HCT116 (cell line): ENCODE measurements at regions of chr17 and their contacts with region 1.

Region 1: DNA sequence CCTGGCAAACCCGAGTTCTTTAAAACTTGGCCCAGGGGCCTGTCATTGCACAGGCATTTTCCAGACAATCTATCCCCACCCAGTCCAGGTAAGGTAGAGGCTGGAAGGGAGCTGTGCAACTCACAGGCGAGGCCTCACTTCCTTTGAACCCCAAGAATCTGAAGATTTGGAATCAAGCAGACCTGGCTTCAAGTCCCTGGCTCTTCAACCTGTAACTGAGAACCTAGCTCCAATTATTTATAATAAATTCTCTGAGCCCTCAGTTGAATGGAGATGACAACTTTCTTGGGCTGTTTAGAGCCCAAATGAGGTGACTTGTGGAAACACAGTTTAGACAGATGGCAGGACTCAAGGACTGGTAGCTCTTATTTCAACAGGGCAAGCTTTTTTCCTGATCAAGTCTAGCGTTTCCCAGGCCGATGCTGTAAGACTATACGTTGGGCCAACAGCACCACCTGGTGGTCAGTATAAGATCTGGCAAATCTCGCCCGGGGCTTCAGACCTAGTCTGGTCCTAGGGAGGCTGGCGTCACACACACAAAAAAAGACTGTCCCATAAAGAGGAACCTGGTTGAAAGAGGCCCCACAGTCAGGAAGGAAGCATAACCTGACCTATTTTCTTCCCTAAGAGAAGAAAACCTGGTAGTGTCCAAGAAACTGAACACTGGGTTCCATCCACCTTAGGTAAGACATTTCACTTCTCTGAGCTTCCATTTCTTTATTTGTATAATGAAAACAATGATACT is 117.9 kb downstream of the C17orf67 start:
- DNase-seq: peak; percentile 83
- ATAC-seq: peak; percentile 99
- H3K4me3 ChIP-seq: no peak overlapping the region
- H3K27ac ChIP-seq: no peak overlapping the region
- H3K4me1 ChIP-seq: peaks cover 0 to 4% of the 10 kb centered on the region in 2 experiments; a peak in 1 of 4 replicates
- H3K27me3 ChIP-seq: no peaks in the 10 kb centered on the region
- CTCF ChIP-seq: peak; percentile 85 to 98 (median 97)
- POLR2A ChIP-seq: no peak
- RAD21 ChIP-seq: peak; percentile 98

Region 2: DNA sequence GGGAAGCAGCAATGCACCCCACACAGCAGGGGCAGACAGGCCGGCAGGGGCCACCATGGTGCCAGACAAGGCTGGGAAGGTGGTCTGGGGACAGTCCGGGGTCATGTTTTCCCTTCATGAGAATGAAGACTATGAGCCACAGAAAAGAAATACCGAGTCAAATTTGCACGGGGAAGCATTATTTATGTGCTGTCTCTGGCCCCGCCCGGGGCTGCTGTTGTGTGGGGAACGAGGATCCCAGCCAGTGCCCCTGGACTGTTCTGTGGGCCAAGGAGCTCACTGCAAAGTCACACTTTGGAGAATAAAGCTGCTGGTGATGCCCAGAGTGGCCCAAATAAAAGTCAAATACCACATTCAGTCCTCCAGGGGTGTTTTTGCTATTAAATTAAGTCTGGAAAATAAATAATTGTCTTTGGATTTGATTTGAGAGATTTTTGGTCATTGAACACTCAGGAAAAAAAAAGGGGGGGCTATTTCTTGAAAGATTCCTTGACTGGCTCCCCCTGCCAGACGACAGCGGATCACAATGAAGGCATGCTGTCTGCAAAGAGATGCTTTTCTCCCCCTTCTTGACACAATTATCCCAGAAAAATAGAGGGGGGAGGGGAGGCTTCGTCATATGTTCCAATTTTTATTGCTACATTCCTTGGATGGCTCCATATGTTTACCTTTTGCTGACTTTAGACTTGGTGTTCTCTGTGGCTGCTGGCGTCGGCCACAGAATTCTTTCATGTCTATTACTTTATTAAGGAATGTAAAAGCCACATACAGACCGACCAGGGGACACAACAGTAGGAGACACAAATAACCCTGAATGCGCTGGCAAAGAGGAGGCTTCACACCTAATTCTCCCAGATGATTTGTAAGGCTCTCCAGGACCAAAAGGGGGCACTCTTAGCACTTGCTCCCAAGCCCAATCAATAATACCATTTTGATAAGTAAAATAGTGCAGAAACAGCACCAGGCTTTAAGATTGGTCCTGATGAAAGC is 589.7 kb before region 1 on chr17:
- CTCF ChIA-PET with region 1: interaction called, 3 read pairs
- POLR2A ChIA-PET with region 1: no interaction called
- RAD21 ChIA-PET with region 1: no interaction called
- intact Hi-C with region 1: loop called (anchors 5 kb)
- DNase-seq: peak; percentile 52
- ATAC-seq: peak; percentile 75
- H3K4me3 ChIP-seq: no peak overlapping the region
- H3K27ac ChIP-seq: no peak overlapping the region
- H3K4me1 ChIP-seq: no peaks in the 10 kb centered on the region
- H3K27me3 ChIP-seq: peaks cover 30% of the 10 kb centered on the region
- CTCF ChIP-seq: peak; percentile 63 to 81 (median 74); a peak in 5 of 6 replicates
- POLR2A ChIP-seq: no peak
- RAD21 ChIP-seq: peak; percentile 74

Region 3: GRCh38 chr17:56514899-56515298 is 200.9 kb before region 1 on chr17:
- CTCF ChIA-PET with region 1: no interaction called
- POLR2A ChIA-PET with region 1: no interaction called
- RAD21 ChIA-PET with region 1: no interaction called
- intact Hi-C with region 1: no loop called
- DNase-seq: no peak
- ATAC-seq: no peak
- H3K4me3 ChIP-seq: no peak overlapping the region
- H3K27ac ChIP-seq: no peak overlapping the region
- H3K4me1 ChIP-seq: no peaks in the 10 kb centered on the region
- H3K27me3 ChIP-seq: peaks cover 51% of the 10 kb centered on the region
- CTCF ChIP-seq: no peak
- POLR2A ChIP-seq: no peak
- RAD21 ChIP-seq: no peak

Region 4: DNA sequence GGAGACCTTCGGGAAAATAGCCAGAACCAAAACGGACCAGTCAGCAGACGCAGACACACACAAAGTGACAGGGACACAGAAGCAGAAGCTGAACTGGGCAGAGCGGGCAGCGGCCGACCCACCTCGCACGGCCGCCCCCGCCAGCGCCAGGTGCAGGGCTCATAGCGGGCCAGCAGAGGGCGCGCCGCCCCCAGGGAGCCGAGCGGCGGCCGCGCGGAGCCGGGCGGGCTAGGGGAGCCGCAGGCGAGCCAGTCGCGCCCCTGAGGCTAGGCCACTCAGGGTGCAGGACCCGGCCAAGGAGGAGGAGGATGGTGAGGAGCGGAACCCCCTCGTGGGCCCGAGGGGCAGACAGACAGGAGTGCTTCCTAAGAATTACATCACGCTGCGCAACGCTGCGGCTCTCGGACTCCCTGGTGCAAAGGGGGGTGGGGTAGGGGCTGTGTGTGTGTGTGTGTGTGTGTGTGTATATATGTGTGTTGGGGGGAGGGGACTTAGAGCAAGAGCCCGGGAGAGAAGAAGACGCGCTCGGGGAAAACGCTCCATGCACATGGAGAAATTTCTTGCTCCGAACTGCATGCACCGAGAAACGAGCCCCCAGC is 123.2 kb before region 1 on chr17:
- CTCF ChIA-PET with region 1: interaction called, 145 read pairs
- POLR2A ChIA-PET with region 1: interaction called, 4 read pairs
- RAD21 ChIA-PET with region 1: interaction called, 23 to 46 read pairs
- intact Hi-C with region 1: loop called (anchors 1 kb)
- DNase-seq: no peak
- ATAC-seq: peak; percentile 80
- H3K4me3 ChIP-seq: peak overlapping the region; percentile 60 to 71
- H3K27ac ChIP-seq: no peak overlapping the region
- H3K4me1 ChIP-seq: peaks cover 5 to 21% of the 10 kb centered on the region in 2 experiments; a peak in 2 of 4 replicates
- H3K27me3 ChIP-seq: peaks cover 35% of the 10 kb centered on the region; the same call in 1 of the 2 replicates
- CTCF ChIP-seq: peak; percentile 72 to 98 (median 76)
- POLR2A ChIP-seq: no peak
- RAD21 ChIP-seq: peak; percentile 87

Region 5: GRCh38 chr17:56679115-56679766 is 36.5 kb before region 1 on chr17:
- CTCF ChIA-PET with region 1: interaction called, 30 read pairs
- POLR2A ChIA-PET with region 1: no interaction called
- RAD21 ChIA-PET with region 1: interaction called, 3 to 9 read pairs
- intact Hi-C with region 1: no loop called
- DNase-seq: peak; percentile 15
- ATAC-seq: peak; percentile 80
- H3K4me3 ChIP-seq: no peak overlapping the region
- H3K27ac ChIP-seq: no peak overlapping the region
- H3K4me1 ChIP-seq: peaks cover 10 to 39% of the 10 kb centered on the region in 2 experiments; a peak in 3 of 4 replicates
- H3K27me3 ChIP-seq: peaks cover 12% of the 10 kb centered on the region; the same call in 1 of the 2 replicates
- CTCF ChIP-seq: peak; percentile 53 to 88 (median 77)
- POLR2A ChIP-seq: no peak
- RAD21 ChIP-seq: peak; percentile 54

Region 6: DNA sequence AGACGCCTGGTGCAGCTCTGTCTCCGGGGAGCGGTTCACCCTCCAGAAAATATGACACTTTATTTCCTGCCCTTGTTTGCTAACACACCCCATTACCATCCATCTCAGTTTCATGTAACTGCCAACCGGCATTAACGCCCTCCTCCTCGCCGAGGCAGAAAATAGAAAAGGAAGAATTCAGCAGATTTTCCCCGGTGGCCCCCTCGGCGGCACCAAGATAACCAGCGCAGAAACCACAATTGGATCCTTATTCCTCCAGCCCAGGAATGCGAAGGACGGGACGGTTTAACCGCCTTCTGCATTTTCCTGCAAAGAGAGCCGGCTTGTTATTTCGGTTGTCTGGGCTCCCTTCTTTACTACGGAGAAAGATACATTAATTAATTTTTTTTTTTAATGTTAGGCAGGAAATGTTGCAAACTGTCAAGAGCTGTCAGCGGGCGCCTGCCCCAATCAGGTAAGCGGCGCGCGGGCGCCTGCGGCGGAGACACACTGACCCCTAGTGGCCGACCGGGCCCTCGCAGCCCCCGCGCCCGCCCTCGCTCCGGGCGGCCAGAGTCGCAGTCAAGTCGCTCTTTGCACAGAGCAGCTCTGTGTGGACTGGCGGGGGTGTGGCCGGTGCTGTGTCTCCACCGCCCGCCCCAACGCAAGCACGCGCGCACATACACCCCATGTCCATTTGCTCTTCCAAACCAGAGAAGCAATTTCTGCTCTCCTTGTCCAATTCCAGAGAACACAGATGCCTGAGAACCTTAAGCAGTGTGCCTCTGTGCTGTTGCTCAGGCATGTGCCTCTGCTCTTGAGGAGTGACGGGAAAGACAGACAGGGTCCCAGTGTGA is 64.3 kb after region 1 on chr17:
- CTCF ChIA-PET with region 1: interaction called, 23 read pairs
- POLR2A ChIA-PET with region 1: interaction called, 3 read pairs
- RAD21 ChIA-PET with region 1: interaction called in 1 of 2 experiments, 8 read pairs
- intact Hi-C with region 1: loop called (anchors 2 kb)
- DNase-seq: peak; percentile 69
- ATAC-seq: peak; percentile 99
- H3K4me3 ChIP-seq: peak overlapping the region; percentile 31 to 49
- H3K27ac ChIP-seq: no peak overlapping the region
- H3K4me1 ChIP-seq: peaks cover 8 to 16% of the 10 kb centered on the region in 2 experiments; a peak in 3 of 4 replicates
- H3K27me3 ChIP-seq: peaks cover 5% of the 10 kb centered on the region; the same call in 1 of the 2 replicates
- CTCF ChIP-seq: peak; percentile 91 to 99 (median 99)
- POLR2A ChIP-seq: no peak
- RAD21 ChIP-seq: peak; percentile 98

Region 7: DNA sequence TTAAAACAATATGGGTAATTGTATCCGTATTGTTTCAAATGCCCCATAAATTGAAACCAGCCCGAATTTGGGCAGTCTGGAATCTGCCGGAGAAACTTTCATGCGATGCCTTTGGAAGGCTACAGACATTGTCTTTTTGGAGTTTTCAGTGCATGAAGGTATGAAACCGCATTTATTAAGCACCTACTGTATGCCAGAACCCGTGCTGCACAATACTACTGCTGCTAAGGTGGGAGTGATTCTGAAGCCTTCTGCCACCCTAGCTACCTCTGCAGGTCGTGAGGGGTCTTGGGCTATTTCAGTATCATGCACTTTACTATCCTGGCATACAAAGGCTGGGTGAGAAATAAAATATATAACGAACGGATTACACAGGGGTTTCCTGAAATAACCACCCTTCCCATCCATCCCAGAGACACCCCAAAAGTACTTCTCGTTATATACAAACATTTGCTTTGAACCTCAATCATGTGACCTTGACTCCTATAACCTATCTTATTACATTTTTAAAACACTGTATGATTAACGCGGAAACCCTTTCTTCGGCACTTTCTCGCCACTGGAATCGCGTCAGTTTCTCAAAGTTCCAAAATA is 539.5 kb after region 1 on chr17:
- CTCF ChIA-PET with region 1: no interaction called
- POLR2A ChIA-PET with region 1: no interaction called
- RAD21 ChIA-PET with region 1: no interaction called
- intact Hi-C with region 1: no loop called
- DNase-seq: no peak
- ATAC-seq: no peak
- H3K4me3 ChIP-seq: peak overlapping the region; percentile 65 to 72
- H3K27ac ChIP-seq: peak overlapping the region; percentile 60
- H3K4me1 ChIP-seq: peaks cover 13 to 27% of the 10 kb centered on the region in 2 experiments
- H3K27me3 ChIP-seq: no peaks in the 10 kb centered on the region
- CTCF ChIP-seq: no peak
- POLR2A ChIP-seq: no peak
- RAD21 ChIP-seq: no peak